WTC11 (cell line): ENCODE measurements at regions of chr16 and their contacts with region 1.

Region 1: GRCh38 chr16:75110637-75111513 is 5.7 kb downstream of the LDHD start:
- DNase-seq: peak; percentile 90
- ATAC-seq: peak; percentile 72
- H3K4me3 Mint-ChIP-seq: peak overlapping the region; percentile 27
- H3K27ac Mint-ChIP-seq: peak overlapping the region; percentile 38
- H3K4me1 Mint-ChIP-seq: peaks cover 53% of the 10 kb centered on the region
- H3K27me3 Mint-ChIP-seq: no peaks in the 10 kb centered on the region
- CTCF ChIP-seq: peak; percentile 80

Region 2: GRCh38 chr16:74991593-74992403 is 119.1 kb before region 1 on chr16:
- CTCF ChIA-PET with region 1: interaction called, 158 read pairs
- POLR2A ChIA-PET with region 1: no interaction called
- DNase-seq: no peak
- ATAC-seq: peak; percentile 28; the same call in 1 of the 2 replicates
- H3K4me3 Mint-ChIP-seq: no peak overlapping the region
- H3K27ac Mint-ChIP-seq: no peak overlapping the region
- H3K4me1 Mint-ChIP-seq: peaks cover 15% of the 10 kb centered on the region
- H3K27me3 Mint-ChIP-seq: no peaks in the 10 kb centered on the region; the same call in 1 of the 2 replicates
- CTCF ChIP-seq: no peak

Region 3: DNA sequence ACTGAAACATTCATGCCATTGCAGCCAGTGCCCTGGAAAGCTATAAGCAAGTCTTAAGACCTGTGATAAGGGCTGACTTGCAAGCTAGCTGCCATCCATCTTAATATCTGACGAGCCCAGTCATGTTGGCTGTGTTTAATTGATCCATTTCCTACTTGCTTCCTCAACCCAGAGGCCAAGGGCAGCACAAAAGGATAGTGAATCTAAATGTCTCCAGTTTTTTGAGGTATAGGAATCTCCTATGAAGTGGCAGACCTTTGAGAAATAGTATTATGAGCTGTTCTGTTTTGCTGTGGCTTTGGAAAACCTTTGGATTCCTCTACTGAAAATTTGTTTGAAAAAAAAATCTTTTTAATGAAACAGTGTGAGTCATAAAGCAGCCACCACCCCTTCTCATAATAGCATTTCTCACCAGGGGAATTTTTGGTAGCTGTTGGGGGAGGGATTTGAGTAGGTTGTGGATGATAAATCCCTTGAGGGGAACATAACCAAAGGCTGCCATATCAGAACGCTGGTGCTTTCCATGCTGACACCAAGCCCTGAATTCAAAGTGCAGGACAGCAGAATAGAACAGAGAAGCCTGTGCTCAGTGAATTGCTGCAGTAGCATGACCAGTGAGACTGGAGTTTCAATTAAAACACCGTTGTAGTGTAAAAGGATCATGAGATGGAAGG is 99.1 kb before region 1 on chr16:
- CTCF ChIA-PET with region 1: interaction called, 22 read pairs
- POLR2A ChIA-PET with region 1: no interaction called
- DNase-seq: no peak
- ATAC-seq: no peak
- H3K4me3 Mint-ChIP-seq: no peak overlapping the region
- H3K27ac Mint-ChIP-seq: no peak overlapping the region; the same call in 1 of the 2 replicates
- H3K4me1 Mint-ChIP-seq: peaks cover 27% of the 10 kb centered on the region
- H3K27me3 Mint-ChIP-seq: no peaks in the 10 kb centered on the region
- CTCF ChIP-seq: no peak

Region 4: DNA sequence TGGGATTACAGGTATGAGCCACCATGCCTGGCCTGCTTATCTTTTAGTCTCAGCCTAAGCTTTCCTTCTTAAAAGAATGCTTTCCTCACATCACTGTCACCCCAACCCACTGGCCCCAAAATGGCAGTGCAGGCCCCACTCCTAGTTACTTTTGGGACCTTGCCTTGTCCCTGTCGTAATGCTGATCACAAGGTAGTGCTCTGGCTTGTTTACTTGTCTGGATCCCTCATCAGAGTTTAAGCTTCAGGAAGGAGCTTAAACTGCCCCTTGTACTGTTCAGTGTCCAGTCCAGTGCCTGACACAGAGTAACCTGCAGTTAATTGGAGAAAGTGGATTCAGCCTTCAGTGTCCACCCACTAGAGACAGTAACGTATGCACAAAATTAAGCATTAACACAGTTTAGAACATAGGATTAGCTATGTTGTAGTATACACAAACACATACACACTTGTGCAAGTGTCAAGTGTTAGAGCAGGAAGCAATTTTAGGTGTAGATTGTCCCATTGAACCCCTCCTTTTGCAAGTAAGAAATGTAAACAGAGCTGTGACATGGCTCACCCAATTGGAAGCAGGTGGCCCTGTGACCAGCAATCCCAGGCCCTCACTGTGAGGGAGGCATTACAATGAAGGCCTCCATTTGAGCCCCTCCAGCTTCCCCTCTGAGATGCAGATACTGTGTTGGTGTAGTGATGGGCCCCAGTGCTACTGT is 38.5 kb before region 1 on chr16:
- CTCF ChIA-PET with region 1: interaction called, 17 read pairs
- POLR2A ChIA-PET with region 1: no interaction called
- DNase-seq: no peak
- ATAC-seq: no peak
- H3K4me3 Mint-ChIP-seq: no peak overlapping the region
- H3K27ac Mint-ChIP-seq: no peak overlapping the region; the same call in 1 of the 2 replicates
- H3K4me1 Mint-ChIP-seq: peaks cover 35% of the 10 kb centered on the region
- H3K27me3 Mint-ChIP-seq: no peaks in the 10 kb centered on the region
- CTCF ChIP-seq: no peak

Region 5: GRCh38 chr16:75092782-75093185 is 18.1 kb before region 1 on chr16:
- CTCF ChIA-PET with region 1: interaction called, 135 read pairs
- POLR2A ChIA-PET with region 1: interaction called, 3 read pairs
- DNase-seq: no peak
- ATAC-seq: peak; percentile 14
- H3K4me3 Mint-ChIP-seq: no peak overlapping the region
- H3K27ac Mint-ChIP-seq: peak overlapping the region; percentile 70
- H3K4me1 Mint-ChIP-seq: peaks cover 59% of the 10 kb centered on the region
- H3K27me3 Mint-ChIP-seq: no peaks in the 10 kb centered on the region
- CTCF ChIP-seq: no peak

Region 6: DNA sequence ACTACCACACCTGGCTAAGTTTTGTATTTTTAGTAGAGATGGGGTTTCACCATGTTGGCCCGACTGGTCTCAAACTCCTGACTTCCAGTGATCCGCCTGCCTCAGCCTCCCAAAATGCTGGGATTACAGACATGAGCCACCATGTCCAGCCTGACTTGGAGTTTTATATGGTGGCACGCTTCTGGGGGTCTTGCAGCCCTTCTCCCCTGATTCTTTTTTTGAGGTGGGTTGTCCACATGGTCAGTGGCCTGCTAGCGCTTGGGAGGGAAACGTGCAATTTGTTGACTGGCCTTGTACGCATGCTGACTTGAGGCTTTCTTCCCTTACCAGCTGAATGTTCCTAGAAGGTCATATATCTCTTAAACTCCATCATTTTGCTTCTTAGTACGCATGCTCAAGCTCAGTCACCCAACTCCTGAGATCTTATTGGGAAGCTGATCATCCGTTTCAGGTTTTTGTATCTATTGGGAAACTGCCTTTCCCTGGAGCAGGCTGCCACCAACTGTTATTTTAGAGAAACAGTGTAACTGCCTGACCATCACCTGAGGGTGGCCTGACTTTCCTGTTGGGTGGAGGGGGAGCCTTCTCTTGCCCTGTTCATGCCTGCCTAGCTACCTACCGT is 19.4 kb after region 1 on chr16:
- CTCF ChIA-PET with region 1: interaction called, 31 read pairs
- POLR2A ChIA-PET with region 1: no interaction called
- DNase-seq: no peak
- ATAC-seq: peak; percentile 95
- H3K4me3 Mint-ChIP-seq: no peak overlapping the region
- H3K27ac Mint-ChIP-seq: no peak overlapping the region
- H3K4me1 Mint-ChIP-seq: peaks cover 13% of the 10 kb centered on the region
- H3K27me3 Mint-ChIP-seq: no peaks in the 10 kb centered on the region; the same call in 1 of the 2 replicates
- CTCF ChIP-seq: no peak

Region 7: DNA sequence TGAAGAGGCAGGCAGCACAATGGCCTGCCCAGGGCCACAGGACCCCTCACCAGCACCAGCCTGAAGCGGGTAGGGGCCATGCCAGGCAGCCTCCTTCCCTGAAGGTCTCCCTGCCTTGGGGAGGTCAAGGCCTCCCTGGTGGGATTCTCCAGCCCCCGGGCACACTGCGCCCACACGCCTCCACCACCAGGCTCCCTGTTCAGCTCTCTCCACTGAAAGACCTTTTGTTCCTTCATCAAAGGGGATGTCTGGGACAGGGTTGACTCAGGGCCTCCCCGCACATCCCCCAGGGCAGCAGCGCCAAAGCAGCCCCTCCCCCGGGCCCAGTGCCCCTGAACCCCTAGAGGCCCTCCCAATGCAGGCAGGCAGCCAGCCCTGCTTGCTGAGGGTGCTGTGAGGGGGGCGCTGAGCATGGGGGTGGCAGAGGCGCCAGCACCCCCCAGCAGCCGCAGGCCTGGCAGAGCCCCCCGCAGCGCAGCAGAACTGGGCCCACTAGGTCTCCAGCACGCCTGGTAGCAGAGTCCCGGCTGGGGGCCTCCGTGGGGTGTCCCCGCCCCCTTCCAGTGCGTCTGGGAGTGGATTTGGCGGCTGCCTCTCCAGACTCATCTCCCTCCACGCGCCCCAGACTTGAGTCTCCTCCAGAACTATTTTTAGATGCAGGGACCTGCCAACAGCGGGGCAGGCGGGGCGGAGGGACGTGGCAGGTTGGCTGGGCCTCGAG is 127.4 kb after region 1 on chr16:
- CTCF ChIA-PET with region 1: no interaction called
- POLR2A ChIA-PET with region 1: no interaction called
- DNase-seq: peak; percentile 15
- ATAC-seq: no peak
- H3K4me3 Mint-ChIP-seq: no peak overlapping the region
- H3K27ac Mint-ChIP-seq: no peak overlapping the region
- H3K4me1 Mint-ChIP-seq: peaks cover 19% of the 10 kb centered on the region
- H3K27me3 Mint-ChIP-seq: no peaks in the 10 kb centered on the region
- CTCF ChIP-seq: no peak